Vagina (tissue), 2 donors: ENCODE measurements at regions of chr16 and their contacts with region 1.

Region 1: DNA sequence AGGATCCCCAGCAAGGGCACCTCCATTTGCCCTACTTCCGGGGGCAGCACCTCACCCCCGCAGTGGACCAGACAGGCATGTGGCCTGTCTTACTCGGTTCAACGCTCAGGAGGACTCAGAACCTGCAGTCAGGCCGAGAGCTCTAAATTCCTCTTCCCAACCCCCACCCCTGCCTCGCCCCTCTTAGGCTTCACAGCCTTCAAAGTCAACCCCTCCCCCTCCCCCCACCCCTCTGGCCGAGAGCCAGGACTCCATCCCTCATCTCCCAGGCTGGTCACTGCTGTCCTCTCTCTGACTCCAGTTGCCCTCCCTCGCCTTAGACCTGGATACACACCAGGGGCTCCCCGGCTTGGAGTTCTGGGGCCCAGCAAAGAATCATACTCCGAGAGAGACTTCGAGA is 8.1 kb upstream of the HS3ST6 start:
- DNase-seq: no peak
- H3K4me3 ChIP-seq: no peak overlapping the region
- H3K27ac ChIP-seq: no peak overlapping the region
- H3K4me1 ChIP-seq: peaks cover 34% of the 10 kb centered on the region
- H3K27me3 ChIP-seq: no peaks in the 10 kb centered on the region
- CTCF ChIP-seq: no peak
- POLR2A ChIP-seq: no peak

Region 2: GRCh38 chr16:1863681-1864460 is 62.4 kb before region 1 on chr16:
- intact Hi-C with region 1: loop called (anchors 2 kb)
- DNase-seq: no peak
- H3K4me3 ChIP-seq: no peak overlapping the region
- H3K27ac ChIP-seq: no peak overlapping the region
- H3K4me1 ChIP-seq: peaks cover 4% of the 10 kb centered on the region
- H3K27me3 ChIP-seq: no peaks in the 10 kb centered on the region
- CTCF ChIP-seq: peak; percentile 13 to 59 (median 51)
- POLR2A ChIP-seq: no peak

Region 3: DNA sequence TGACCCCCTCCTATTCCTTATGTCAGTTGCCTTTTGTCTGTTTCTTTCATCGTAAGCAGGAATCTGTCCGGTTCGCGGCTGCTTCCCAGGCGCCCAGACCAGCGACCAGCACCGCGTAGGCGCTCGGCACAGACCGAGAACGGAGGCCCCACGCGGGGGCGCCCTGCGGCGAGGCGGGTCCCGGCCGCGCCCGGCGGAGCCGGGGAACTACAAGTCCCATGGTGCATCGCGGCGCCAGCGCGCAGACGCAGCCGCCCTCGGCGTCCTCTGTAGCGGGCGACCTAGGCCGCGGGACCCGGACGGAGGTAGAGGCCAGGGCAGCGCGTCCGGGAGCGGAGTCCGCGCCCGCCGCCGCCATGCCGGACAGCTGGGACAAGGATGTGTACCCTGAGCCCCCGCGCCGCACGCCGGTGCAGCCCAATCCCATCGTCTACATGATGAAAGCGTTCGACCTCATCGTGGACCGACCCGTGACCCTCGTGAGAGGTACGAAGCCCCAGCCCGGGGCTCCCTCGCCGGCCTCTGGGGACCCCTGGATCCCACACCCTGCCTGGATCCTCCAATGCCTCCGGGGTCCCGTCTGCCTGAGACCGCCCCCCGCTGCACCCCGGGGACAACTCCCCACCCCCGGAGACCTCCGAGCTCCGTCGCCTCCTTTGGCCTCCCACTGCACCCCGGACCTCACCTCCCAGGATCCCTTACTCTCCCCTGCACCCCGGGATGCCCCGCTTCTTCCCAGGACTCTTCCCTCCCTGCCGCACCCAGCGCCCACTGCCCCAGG is 33.2 kb after region 1 on chr16 and contains the start of gene NDUFB10:
- intact Hi-C with region 1: no loop called
- DNase-seq: no peak
- H3K4me3 ChIP-seq: peak within 1 kb of the TSS; percentile 73 to 81
- H3K27ac ChIP-seq: peak within 1 kb of the TSS; percentile 79
- H3K4me1 ChIP-seq: peaks cover 34% of the 10 kb centered on the region
- H3K27me3 ChIP-seq: no peaks in the 10 kb centered on the region
- CTCF ChIP-seq: peak in 2 of 3 experiments; percentile 63 to 65
- POLR2A ChIP-seq: peak in 1 of 2 donors; percentile 67
- total RNA-seq, gene NDUFB10: 132 TPM

Region 4: DNA sequence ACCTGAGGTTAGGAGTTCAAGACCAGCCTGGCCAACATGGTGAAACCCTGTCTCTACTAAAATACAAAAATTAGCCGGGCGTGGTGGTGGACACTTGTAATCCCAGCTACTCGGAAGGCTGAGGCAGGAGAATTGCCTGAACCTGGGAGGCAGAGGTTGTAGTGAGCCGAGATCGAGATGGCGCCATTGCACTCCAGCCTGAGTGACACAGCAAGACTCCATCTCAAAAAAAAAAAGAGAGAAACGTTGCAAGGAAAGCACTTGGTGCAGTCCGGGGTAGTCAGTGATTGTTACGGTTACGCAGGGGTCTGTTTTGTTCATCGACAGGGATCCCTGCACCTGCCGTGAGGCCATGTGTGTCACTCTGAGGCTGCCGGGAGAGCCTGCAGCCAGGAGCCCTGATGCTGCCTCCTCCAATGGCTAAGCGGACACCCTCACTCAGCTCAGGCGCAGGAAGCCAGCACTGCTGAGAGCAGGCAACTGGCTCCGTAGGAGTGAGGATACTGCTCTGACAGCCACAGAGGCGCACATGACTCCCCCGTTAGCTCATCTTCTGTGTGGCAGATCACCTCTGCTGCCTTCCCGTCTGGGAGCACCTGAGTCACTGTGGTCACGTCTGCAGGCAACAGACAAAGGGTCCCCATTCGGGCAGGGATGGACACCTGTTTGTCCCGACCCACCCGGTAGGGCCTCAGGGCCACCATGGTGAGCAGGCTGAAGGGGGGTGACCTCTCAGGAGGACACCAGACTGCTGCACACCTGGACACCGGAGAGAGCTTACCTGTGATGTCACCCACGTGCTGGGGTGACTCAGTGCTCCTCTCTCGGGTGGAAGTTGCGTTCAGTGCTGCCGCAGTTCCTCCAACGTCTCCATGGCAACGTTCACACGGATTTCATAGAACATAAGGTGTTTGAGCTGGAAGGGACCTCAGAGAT is 216.9 kb after region 1 on chr16:
- intact Hi-C with region 1: no loop called
- DNase-seq: no peak
- H3K4me3 ChIP-seq: no peak overlapping the region
- H3K27ac ChIP-seq: no peak overlapping the region
- H3K4me1 ChIP-seq: peaks cover 15% of the 10 kb centered on the region
- H3K27me3 ChIP-seq: no peaks in the 10 kb centered on the region
- CTCF ChIP-seq: no peak
- POLR2A ChIP-seq: no peak